Cardiac septum (tissue), 1 donor: ENCODE measurements at regions of chr4 and their contacts with region 1.

Region 1: DNA sequence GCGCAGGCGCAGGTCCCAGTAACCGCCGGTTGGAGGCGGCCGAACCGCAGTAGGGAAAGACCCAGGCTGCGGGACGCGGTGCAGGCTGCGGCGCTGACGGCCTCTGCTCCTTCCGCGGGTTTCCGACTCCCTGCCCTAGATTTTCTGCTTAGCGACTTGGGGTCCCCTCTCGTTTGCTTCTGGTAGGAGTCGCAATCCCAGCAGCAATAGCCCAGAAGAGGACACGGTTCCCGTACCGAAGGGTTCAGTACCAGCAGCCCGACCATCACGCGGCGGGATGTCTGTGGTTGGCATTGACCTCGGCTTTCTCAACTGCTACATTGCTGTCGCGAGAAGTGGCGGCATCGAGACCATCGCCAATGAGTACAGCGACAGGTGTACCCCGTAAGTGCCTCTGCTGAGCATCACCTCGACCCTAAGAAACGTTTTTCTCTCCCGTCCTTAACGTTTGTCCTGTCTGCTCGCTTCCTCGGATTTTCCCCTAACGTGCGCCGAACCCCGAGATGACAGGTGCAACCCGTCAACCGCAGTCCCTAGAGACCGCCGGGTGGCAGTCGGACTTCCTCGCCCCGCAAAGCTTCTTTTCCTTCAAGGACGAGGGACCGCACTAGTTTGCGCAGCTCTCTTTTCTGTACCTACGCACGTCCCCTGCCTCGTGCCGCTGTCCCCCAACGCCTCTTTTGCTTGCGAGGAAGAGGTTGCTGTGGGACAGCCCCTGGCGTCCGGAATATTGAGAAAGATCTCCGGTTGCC is at the start of gene HSPA4L:
- DNase-seq: peak; percentile 77
- total RNA-seq, gene HSPA4L: 12.4 TPM

Region 2: GRCh38 chr4:127880764-127881562 is 98.5 kb after region 1 on chr4 and contains the start of gene PLK4:
- intact Hi-C with region 1: loop called (anchors 5 kb)
- DNase-seq: peak; percentile 98
- total RNA-seq, gene PLK4: 0.75 TPM

Region 3: DNA sequence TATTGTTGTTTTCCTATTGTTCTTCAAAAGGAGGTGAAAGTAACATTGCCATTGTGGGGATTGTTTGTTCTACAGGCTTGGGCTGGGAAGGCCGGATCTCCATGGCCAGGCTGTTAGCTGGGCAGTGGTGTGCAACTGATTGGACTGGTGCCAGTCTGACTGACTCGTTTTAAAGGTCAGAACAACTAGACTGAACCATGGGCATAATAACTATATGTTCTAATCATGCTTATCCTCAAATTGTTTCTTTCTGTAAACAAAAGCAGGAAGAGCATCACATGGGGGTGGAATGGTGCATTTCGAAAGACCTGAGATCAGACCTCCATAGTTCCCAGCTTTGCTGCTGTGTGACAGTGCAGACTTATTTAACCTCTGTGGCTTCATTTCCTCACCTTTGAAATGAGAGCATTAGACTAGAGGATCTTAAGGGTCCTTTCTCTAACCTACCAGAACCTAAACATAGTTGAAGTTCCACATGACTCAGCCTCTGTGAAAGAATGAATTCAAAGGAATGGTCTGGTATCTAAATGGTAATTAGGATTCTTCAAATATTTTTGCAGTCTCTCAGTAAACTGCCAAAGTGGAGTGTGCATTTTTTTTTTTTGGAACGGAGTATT is 571.9 kb after region 1 on chr4:
- intact Hi-C with region 1: no loop called
- DNase-seq: no peak